ENCODE measurements at regions of chr19 and their contacts with region 1.

Region 1: GRCh38 chr19:39031368-39032062 is 834 bp downstream of the FBXO27 start:
- DNase-seq: peak; percentile 95 to 97 (median 96)
- ATAC-seq: peak; percentile 98
- H3K4me3 ChIP-seq: peak overlapping the region; percentile 54
- H3K27ac ChIP-seq: peak overlapping the region; percentile 64; the same call in 1 of the 3 replicates
- H3K4me1 ChIP-seq: peaks cover 7 to 23% of the 10 kb centered on the region in 2 experiments; a peak in 4 of 5 replicates
- H3K27me3 ChIP-seq: no peaks in the 10 kb centered on the region
- CTCF ChIP-seq: no peak
- EP300 ChIP-seq: no peak
- POLR2A ChIP-seq: peak; percentile 27; the same call in 1 of the 2 replicates
- RAD21 ChIP-seq: no peak

Region 2: DNA sequence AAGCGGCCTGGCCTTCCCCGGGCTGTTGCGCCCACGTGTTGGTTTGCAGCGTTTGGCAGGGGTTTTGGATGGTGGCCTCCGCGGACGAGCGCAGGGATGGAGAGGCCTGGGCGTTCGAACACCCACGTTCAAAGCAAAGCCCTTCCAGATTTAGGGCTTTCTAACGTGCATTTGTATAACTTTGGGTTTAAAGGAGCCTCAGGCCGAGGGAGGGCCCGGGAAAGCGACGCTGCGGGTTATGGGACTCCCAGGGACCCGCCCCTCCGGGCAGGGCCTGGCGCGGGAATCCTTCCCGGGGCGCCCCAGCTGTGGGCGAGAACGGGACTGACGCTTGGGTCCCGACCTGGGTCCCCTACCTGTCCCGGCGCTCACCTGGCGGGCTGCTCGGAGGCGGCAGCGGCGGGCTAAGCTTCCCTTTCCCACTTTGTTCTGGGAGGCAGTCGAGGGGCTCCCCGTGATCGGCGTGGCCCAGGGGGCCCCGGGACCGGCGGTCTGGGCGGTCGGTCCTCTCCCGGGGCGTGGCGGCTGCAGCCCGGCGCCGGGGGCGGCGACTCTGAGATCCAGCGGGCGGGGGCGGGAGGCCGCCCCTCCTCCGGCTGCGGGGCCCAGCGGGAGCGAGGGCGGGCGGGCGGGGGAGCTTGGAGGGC is 56.2 kb before region 1 on chr19 and contains the start of gene FBXO17:
- CTCF ChIA-PET with region 1: no interaction called
- POLR2A ChIA-PET with region 1: no interaction called
- in situ Hi-C with region 1: no loop called
- intact Hi-C with region 1: loop called (anchors 5 kb)
- DNase-seq: peak; percentile 81 to 91 (median 83)
- ATAC-seq: peak; percentile 91
- H3K4me3 ChIP-seq: peak within 1 kb of the TSS; percentile 83
- H3K27ac ChIP-seq: peak within 1 kb of the TSS; percentile 75
- H3K4me1 ChIP-seq: peaks cover 13 to 21% of the 10 kb centered on the region in 2 experiments; a peak in 4 of 5 replicates
- H3K27me3 ChIP-seq: no peaks in the 10 kb centered on the region; a peak in 1 of 5 replicates
- CTCF ChIP-seq: no peak
- EP300 ChIP-seq: no peak
- POLR2A ChIP-seq: peak; percentile 60
- RAD21 ChIP-seq: no peak
- polyA plus RNA-seq, gene FBXO17: 4.1 to 4.9 TPM

Measured in K562 (cell line).